OCI-LY7 (cell line): ENCODE measurements at regions of chr17 and their contacts with region 1.

Region 1: GRCh38 chr17:42937712-42938596 is 26.3 kb downstream of the AARSD1 start:
- DNase-seq: peak; percentile 78
- H3K4me3 ChIP-seq: no peak overlapping the region
- H3K27ac ChIP-seq: no peak overlapping the region
- H3K4me1 ChIP-seq: no peaks in the 10 kb centered on the region
- CTCF ChIP-seq: peak; percentile 90

Region 2: DNA sequence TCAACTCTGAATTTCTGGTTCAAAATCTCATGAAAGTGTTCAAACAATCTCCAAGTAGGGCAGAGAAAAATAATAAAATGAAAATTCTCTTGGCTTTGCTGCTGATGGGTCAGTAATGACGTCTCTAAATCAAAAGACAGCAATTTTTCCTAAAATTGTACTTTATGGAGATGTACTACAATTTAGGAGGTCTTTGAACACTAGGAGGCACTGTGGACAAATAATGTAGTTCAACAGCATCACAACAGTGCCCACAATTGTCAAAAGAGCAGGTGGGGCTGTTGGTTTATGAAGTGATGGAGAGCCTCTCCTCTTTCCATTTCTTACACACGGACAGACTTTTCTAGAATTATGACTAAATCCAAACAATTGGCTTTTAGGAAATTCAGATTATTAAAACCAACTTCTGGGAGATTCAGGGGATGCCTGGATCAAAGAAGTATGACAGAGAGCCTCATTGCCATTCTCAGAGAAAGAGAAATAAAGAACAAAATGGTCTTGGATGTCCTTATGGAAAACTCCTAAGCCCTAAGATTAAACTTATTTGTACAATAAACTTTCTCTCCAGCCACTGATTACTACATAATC is 216.9 kb before region 1 on chr17:
- CTCF ChIA-PET with region 1: no interaction called
- POLR2A ChIA-PET with region 1: no interaction called
- intact Hi-C with region 1: loop called (anchors 1 kb)
- DNase-seq: peak; percentile 84
- H3K4me3 ChIP-seq: no peak overlapping the region
- H3K27ac ChIP-seq: no peak overlapping the region
- H3K4me1 ChIP-seq: no peaks in the 10 kb centered on the region
- CTCF ChIP-seq: peak; percentile 94

Region 3: GRCh38 chr17:42843358-42843934 is 94.5 kb before region 1 on chr17:
- CTCF ChIA-PET with region 1: no interaction called
- POLR2A ChIA-PET with region 1: no interaction called
- intact Hi-C with region 1: loop called (anchors 2 kb)
- DNase-seq: peak; percentile 56
- H3K4me3 ChIP-seq: no peak overlapping the region
- H3K27ac ChIP-seq: no peak overlapping the region
- H3K4me1 ChIP-seq: no peaks in the 10 kb centered on the region
- CTCF ChIP-seq: peak; percentile 85

Region 4: GRCh38 chr17:42997984-42998938 is 60.3 kb after region 1 on chr17 and contains the start of gene RPL27:
- CTCF ChIA-PET with region 1: interaction called, 4 read pairs
- POLR2A ChIA-PET with region 1: no interaction called
- intact Hi-C with region 1: loop called (anchors 5 kb)
- DNase-seq: peak; percentile 100
- H3K4me3 ChIP-seq: peak within 1 kb of the TSS; percentile 95
- H3K27ac ChIP-seq: peak within 1 kb of the TSS; percentile 63
- H3K4me1 ChIP-seq: peaks cover 20% of the 10 kb centered on the region
- CTCF ChIP-seq: peak; percentile 93
- total RNA-seq, gene RPL27: 1,550 and 2,299 TPM in 2 replicates

Region 5: DNA sequence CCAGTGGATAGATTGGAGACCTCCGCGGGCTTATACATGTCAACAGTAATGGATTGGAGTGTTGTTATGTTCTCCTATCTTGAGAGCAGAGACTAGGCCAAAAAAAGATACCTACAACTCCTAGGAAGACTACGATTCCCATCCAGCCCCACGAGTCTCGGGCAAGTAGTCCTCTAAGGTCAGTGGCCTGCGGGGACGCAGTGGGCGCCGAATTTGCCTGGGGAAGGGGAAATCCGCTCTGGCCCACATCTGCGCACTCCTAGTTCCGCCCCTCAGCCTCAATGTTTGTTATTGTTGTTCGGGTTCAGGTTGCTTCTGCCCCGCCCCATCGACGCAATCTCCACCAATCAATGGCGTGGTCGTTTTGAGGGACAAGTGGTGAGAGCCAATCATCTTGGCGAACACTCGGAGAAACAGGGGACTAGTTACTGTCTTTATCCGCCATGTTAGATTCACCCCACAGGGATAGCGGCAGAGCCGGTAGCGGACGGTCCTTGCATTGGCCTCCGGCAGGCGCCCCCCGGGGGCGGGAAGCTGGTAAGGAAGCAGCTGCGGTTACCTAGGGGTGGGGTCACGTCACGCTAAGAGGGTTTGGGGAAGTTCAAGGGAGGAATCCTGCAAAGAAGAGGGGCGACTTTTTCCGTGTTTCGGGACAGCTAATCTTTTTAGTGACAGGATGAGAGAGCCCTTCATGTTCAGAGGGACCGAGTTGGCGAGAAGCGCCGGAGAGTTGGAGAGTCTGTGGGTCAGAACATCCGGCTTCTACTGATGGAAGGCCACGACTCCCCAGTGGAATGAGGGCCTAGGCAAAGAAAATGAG is 233.0 kb after region 1 on chr17 and contains the start of gene NBR1:
- CTCF ChIA-PET with region 1: no interaction called
- POLR2A ChIA-PET with region 1: no interaction called
- intact Hi-C with region 1: no loop called
- DNase-seq: peak; percentile 99
- H3K4me3 ChIP-seq: peak within 1 kb of the TSS; percentile 82
- H3K27ac ChIP-seq: peak within 1 kb of the TSS; percentile 82
- H3K4me1 ChIP-seq: peaks cover 19% of the 10 kb centered on the region
- CTCF ChIP-seq: peak; percentile 66
- total RNA-seq, gene NBR1: 15.2 and 16.2 TPM in 2 replicates